GM10248 (cell line): ENCODE measurements at regions of chr9 and their contacts with region 1.

Region 1: DNA sequence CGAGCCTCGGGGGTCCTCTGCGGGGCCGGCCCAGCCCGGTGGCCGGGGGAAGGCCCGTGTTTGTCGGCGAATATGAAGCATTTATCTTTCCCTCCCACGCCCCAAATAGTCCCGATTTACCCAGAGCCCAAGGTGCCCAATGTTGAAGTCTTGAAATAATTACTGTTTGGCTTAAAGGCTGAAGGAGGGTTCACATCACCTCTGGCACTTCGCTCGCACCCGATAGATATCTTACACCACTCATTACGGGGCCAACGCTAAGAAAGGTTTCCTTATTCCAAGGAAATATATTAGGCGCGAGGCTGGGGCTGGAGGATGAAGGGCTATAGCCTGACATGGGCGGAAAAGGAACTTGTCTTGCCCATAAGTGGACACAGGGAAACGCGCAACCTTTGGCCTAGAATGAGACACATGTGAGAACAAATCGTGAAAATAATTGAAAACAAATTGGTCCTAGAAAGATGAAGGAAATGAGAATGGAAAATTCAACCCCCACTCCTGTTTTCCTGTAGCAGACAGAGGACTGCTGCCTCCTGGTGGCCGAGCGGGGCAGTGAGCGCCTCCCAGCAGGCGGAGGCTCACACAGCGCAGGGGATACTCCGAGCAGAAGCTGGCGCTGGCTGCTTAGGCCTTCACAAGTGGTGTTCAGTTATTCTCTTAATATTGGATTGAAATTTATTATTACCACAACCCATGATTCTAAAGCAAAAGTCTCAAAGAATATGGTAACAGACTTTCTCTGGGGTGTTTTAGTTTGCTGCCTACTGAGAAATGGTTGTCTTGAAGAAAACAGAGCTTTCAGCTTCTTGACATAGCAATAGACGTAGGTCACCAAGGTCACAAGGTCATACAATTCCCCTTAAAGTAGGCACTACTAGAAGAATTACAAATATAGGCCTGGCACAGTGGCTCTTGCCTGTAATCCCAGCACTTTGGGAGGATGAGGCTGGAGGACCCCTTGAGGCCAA is 7.9 kb downstream of the CCL21 start:
- DNase-seq: peak; percentile 83
- CTCF ChIP-seq: peak; percentile 99

Region 2: DNA sequence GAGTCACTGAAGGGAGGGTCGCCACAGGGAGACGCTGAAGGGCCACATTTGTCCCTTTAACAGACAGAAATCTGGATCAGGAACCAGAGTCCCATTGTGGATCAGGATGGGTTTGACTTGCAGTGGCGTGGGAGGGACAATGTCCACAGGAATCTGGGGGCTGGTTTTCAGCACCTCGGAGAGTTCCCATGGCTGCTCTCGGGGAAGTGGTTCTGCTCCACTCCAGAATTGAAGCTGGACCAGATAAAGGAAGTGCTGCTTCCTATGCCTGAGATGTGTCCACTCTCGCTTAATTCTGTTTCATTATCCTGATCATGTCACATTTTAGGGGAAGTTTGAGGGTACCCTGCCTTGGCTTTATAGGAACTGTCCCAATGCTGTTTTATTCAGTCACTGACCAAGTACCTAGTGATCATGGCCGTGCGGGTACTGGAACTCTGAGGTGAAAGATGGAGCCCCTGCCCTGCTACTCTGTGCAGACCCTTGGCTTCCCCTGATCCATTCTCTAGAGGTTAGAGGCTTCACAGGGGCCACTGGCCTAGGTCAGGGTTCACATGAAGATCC is 208.0 kb before region 1 on chr9:
- CTCF ChIA-PET with region 1: no interaction called
- POLR2A ChIA-PET with region 1: no interaction called
- DNase-seq: no peak
- CTCF ChIP-seq: no peak

Region 3: DNA sequence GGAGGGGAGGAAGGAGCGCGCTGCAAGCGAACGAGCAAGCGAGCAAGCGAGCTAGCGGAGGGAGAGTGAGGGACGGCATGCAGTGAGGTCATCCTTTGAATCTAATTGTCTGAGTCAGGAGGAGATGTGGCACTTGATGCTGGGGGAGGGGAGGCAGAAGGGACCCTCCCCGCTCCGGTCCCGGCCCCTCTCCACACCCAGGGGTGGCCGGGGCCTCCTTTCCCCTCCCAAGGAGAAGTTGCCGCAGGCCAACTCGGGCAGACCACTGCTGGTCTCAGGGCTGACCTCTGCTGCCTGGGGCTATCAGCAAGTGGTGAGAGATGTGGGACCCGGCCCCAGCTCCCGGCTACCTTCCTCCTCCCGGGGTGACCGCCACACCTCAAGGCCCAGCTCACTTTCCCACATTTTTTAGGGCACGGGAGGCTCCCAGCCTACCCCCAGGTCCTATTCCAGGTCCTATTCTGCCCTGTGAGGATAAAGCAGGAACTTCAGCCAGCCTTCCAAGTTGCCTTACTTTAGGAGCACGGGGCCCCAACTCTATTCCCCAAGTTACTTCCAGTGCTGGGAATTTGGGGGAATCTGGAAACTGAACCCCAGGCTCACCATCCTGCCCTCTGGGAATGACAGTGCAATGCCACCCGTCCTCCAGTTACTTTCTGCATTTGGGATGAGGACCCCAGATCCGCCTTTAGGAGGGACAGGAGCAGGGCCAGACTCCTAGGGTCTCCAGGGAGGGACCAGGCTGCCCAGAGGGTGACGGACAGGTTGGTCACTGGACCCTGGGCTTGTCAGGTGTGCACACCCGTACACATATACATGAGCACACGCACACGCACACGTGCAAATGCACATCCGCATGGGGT is 123.6 kb before region 1 on chr9:
- CTCF ChIA-PET with region 1: no interaction called
- POLR2A ChIA-PET with region 1: no interaction called
- DNase-seq: no peak
- CTCF ChIP-seq: no peak

Region 4: DNA sequence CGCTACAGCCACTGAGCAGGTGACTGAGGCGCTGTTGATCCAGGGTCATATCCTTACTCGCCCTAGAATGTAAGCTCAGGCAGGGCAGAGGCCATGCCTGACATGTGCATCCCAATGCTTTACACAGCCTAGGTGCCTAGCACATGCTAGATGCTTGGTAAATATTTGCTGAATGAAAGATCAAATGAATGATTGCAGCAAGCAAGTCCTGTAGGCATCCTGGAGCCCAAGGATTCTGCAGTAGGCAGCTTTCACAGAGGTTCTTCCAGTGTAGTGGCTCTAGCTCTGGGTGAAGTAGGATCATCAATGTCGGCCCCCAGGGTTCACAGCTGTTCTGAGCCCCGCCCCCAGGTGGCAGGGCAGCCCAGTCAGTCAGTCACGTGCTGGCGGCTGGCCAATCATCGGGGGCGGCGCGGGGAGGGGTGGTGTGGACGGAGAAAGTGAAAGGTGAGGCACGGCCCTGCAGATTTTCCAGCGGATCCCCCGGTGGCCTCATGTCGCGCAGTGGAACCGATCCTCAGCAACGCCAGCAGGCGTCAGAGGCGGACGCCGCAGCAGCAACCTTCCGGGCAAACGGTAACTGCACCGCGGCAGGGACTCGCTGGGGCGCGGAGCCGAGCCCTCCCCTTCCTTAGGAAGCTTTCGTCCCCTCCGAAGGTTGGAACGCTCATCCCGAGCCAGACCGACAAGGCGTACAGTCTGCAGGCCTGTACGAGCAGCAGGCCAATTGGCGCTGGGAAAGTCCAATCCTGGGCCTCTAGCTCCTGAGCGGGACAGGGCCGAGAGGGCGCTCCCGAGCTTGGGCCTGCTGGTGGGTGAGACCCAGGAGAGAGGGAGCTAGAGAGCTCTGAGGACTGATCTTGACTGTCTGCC is 55.6 kb before region 1 on chr9 and contains the start of gene GALT:
- CTCF ChIA-PET with region 1: interaction called, 22 read pairs
- POLR2A ChIA-PET with region 1: no interaction called
- DNase-seq: peak; percentile 97
- CTCF ChIP-seq: peak; percentile 57

Region 5: DNA sequence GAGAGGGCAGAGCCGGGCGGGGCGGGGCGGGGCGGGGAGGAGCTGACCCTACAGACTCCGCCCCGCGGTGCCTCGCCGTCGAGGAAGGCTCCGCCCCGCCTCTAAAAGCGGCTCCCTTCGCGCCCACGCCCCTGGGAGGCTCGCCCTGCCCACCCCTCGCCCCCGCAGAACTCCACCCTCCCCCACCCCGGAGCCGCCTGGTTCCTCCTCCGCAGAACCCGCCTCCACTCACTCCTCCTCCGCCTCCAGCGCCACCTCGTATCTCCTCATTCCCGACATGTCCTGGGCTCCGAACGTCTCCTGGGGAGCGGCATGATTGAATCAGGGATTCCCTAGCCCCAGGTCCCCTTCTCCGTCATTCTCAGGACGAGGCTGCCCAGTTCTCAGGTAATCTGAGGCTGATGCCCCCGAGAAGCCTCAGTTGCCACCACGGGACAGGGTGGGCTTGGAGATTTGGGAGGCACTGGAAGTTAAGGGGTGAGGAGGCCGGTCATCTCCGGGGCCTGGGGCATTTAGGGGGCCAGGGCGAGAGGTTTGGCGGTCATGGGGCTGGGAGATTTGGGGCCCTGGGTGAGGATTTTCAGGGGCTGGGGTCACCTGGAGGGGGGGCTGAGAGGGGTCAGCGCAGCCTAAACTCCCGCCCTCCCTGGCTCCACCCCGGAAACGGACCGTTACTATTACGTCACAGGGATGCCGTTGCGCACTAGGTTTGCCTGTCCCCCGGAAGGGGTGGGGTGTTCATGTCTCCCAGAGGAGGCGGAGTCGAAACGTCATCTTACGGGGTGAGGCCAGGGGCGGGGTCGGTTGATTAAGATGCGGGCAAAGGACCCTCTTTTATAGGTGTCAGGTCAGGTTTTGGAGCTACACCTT is 36.4 kb before region 1 on chr9:
- CTCF ChIA-PET with region 1: interaction called, 14 read pairs
- POLR2A ChIA-PET with region 1: interaction called, 3 read pairs
- DNase-seq: peak; percentile 94
- CTCF ChIP-seq: no peak

Region 6: GRCh38 chr9:34675048-34675714 is 26.9 kb before region 1 on chr9:
- CTCF ChIA-PET with region 1: interaction called, 49 read pairs
- POLR2A ChIA-PET with region 1: no interaction called
- DNase-seq: peak; percentile 72
- CTCF ChIP-seq: peak; percentile 91

Region 7: GRCh38 chr9:34686231-34686630 is 15.8 kb before region 1 on chr9:
- CTCF ChIA-PET with region 1: interaction called, 30 read pairs
- POLR2A ChIA-PET with region 1: no interaction called
- DNase-seq: no peak
- CTCF ChIP-seq: no peak

Region 8: GRCh38 chr9:34690983-34691935 is 10.8 kb before region 1 on chr9 and contains the start of gene CCL19:
- CTCF ChIA-PET with region 1: interaction called, 30 read pairs
- POLR2A ChIA-PET with region 1: no interaction called
- DNase-seq: no peak
- CTCF ChIP-seq: no peak

Region 9: GRCh38 chr9:34715639-34716215 is 13.7 kb after region 1 on chr9:
- CTCF ChIA-PET with region 1: interaction called, 15 read pairs
- POLR2A ChIA-PET with region 1: no interaction called
- DNase-seq: no peak
- CTCF ChIP-seq: no peak